ENCODE measurements at regions of chr9 and their contacts with region 1.

Region 1: DNA sequence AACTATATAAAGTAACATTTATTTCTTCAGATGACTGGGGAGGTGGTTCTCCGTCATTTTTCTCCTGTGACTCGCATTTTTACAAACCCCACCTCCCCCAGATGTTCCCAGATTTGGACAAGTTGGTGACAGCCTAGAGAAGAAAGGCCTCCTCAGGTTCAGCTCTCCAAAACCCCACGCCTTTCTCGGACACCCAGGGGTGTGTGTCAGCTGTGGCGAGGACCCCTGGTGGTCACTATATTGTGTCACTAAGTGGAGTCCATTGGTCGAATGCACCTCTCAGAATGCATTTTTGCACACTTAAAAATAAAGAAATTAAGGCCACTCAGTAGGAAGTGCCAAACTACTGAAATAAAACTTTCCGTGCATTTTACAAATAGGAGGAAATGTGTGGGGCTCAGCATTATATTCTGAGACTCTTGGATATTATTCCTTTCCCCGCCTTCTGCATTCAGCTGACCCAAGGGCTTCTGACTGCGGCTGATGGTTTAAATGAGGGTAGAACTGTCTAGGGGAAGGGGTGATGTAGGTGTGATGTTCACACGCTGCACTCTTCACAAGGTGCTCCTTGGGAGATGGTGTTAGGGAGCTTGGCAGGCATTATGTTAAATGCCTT is 47.6 kb downstream of the ACO1 start:
- DNase-seq: no peak
- ATAC-seq: peak; percentile 36 to 72 (median 58)
- H3K4me3 ChIP-seq: no peak overlapping the region
- H3K27ac ChIP-seq: no peak overlapping the region
- H3K4me1 ChIP-seq: peaks cover 0 to 13% (median 4%) of the 10 kb centered on the region in 4 donors
- H3K27me3 ChIP-seq: no peaks in the 10 kb centered on the region
- CTCF ChIP-seq: peak; percentile 43 to 56 (median 46)
- POLR2A ChIP-seq: no peak

Region 2: DNA sequence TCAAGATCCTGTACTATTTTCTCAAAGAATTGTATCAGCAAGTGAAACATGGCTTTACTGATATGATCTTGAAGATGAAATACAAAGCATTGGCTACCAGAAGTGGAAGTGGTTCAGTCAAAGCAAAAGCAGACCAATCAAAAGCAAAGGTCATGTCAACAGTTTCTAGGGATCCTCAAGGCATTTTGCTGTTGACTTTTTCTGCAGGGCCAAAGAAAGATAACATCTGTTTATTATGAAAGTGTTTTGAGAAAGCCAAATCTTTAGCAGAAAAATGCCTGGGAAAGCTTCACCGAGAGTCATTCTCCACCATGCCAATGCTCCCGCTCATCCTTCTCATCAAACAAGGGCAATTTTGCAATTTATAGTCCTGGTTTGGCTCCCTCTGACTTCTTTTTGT is 137.9 kb before region 1 on chr9:
- intact Hi-C with region 1: no loop called
- DNase-seq: no peak
- ATAC-seq: peak in 1 of 4 donors; percentile 44
- H3K4me3 ChIP-seq: no peak overlapping the region
- H3K27ac ChIP-seq: no peak overlapping the region
- H3K4me1 ChIP-seq: no peaks in the 10 kb centered on the region
- H3K27me3 ChIP-seq: no peaks in the 10 kb centered on the region
- CTCF ChIP-seq: no peak
- POLR2A ChIP-seq: no peak

Region 3: GRCh38 chr9:32487981-32488380 is 55.9 kb after region 1 on chr9:
- intact Hi-C with region 1: no loop called
- DNase-seq: no peak
- ATAC-seq: peak in 1 of 4 donors; percentile 18
- H3K4me3 ChIP-seq: no peak overlapping the region
- H3K27ac ChIP-seq: peak overlapping the region in 2 of 3 donors; percentile 36 to 37
- H3K4me1 ChIP-seq: peaks cover 0 to 22% (median 11%) of the 10 kb centered on the region in 4 donors
- H3K27me3 ChIP-seq: no peaks in the 10 kb centered on the region
- CTCF ChIP-seq: no peak
- POLR2A ChIP-seq: no peak

Region 4: GRCh38 chr9:32526041-32526706 is 94.1 kb after region 1 on chr9 and contains the start of gene RIGI:
- intact Hi-C with region 1: loop called in 1 of 2 experiments (anchors 10 kb)
- DNase-seq: peak; percentile 96 to 97 (median 97)
- ATAC-seq: peak; percentile 92 to 96 (median 94)
- H3K4me3 ChIP-seq: peak within 1 kb of the TSS; percentile 65 to 74 (median 68)
- H3K27ac ChIP-seq: peak within 1 kb of the TSS; percentile 84 to 91 (median 87)
- H3K4me1 ChIP-seq: peaks cover 0 to 24% (median 9%) of the 10 kb centered on the region in 4 donors
- H3K27me3 ChIP-seq: no peaks in the 10 kb centered on the region
- CTCF ChIP-seq: peak; percentile 48 to 66 (median 58)
- POLR2A ChIP-seq: peak; percentile 79
- total RNA-seq, gene RIGI: 2.7 to 6.1 (median 4.8) TPM

Measured in right lobe of liver (tissue), 6 donors.